RWPE1 (cell line): ENCODE measurements at regions of chr2 and their contacts with region 1.

Region 1: GRCh38 chr2:100610381-100610831 is 47.6 kb downstream of the PDCL3 start:
- DNase-seq: peak; percentile 78
- H3K27ac ChIP-seq: no peak overlapping the region
- CTCF ChIP-seq: peak; percentile 82

Region 2: DNA sequence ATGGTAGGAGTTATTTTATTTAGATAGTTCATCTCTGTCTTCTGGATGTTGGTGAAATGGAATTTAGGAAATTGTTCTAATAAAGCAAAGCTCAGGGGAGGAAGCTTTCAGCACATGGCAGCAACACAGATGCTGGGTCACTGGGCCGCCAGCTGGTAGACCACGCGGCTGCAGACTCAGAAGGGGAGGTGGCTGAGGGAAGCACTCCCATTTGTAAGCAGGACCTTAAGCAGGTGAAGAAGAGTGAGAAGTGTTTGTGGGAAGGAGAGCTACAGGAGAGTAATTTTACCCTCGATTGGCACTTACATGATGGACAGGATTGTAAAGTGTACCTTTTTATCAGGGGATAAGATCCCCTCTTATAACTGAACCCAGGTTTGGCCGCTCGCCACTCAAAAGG is 115.7 kb before region 1 on chr2:
- CTCF ChIA-PET with region 1: no interaction called
- POLR2A ChIA-PET with region 1: no interaction called
- DNase-seq: no peak
- H3K27ac ChIP-seq: no peak overlapping the region
- CTCF ChIP-seq: no peak

Region 3: GRCh38 chr2:100757621-100758394 is 147.4 kb after region 1 on chr2:
- CTCF ChIA-PET with region 1: no interaction called
- POLR2A ChIA-PET with region 1: no interaction called
- DNase-seq: no peak
- H3K27ac ChIP-seq: no peak overlapping the region
- CTCF ChIP-seq: no peak

Region 4: DNA sequence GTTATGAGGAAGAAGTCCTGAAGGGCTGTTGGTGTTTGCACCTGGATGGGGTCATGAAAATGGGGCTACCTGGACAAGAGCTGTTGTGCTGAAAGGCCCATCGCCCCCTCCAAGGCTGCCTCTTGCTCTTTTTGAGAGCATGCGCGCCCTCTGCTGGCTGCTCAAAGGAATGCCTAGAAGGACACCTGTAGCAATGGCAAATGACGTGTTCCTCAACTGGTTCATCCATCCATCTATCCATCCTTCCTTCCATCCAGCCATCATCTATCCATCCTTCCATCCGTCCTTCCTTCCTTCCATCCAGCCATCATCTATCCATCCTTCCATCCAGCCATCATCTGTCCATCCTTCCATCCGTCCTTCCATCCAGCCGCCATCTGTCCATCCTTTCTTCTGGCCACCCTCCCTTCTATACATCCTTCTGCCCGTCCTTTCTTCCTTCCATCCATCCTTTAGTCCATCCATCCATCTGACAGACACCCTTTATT is 374.5 kb after region 1 on chr2:
- CTCF ChIA-PET with region 1: interaction called, 12 read pairs
- POLR2A ChIA-PET with region 1: no interaction called
- DNase-seq: peak; percentile 71
- H3K27ac ChIP-seq: no peak overlapping the region
- CTCF ChIP-seq: peak; percentile 83

Region 5: GRCh38 chr2:101230541-101230993 is 620.2 kb after region 1 on chr2:
- CTCF ChIA-PET with region 1: no interaction called
- POLR2A ChIA-PET with region 1: no interaction called
- DNase-seq: no peak
- H3K27ac ChIP-seq: no peak overlapping the region
- CTCF ChIP-seq: no peak